SK-N-SH (cell line): ENCODE measurements at regions of chr16 and their contacts with region 1.

Region 1: GRCh38 chr16:361872-362701 is 8.3 kb downstream of the MRPL28 start:
- DNase-seq: peak; percentile 90
- H3K4me3 ChIP-seq: no peak overlapping the region
- H3K27ac ChIP-seq: no peak overlapping the region
- H3K4me1 ChIP-seq: peaks cover 0 to 18% of the 10 kb centered on the region in 2 experiments; a peak in 1 of 4 replicates
- H3K27me3 ChIP-seq: no peaks in the 10 kb centered on the region
- CTCF ChIP-seq: peak; percentile 69
- EP300 ChIP-seq: no peak
- RAD21 ChIP-seq: peak; percentile 93

Region 2: DNA sequence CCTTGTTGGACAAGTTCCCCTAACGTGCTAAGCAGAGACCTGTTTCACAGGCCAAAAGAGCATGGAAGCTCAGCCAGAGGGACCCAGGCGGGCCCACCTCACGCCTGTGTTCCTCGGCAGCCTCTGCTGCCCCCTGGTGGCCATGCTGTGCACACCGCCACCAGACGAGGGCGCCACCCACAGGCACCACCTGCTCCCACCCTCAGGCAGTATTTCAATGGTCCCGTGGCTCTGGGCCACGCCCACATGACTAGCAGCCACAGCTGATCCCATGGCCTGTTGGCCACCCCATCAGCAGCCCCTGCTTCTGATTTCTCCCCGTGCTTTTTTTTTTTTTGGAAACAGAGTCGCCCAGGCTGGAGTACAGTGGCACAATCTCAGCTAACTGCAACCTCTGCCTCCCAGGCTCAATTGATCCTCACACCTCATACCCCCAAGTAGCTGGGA is 265.1 kb before region 1 on chr16:
- CTCF ChIA-PET with region 1: interaction called, 14 read pairs
- POLR2A ChIA-PET with region 1: no interaction called
- DNase-seq: peak; percentile 95
- H3K4me3 ChIP-seq: no peak overlapping the region; a peak in 1 of 4 replicates
- H3K27ac ChIP-seq: no peak overlapping the region
- H3K4me1 ChIP-seq: peaks cover 0 to 8% of the 10 kb centered on the region in 2 experiments; a peak in 1 of 4 replicates
- H3K27me3 ChIP-seq: no peaks in the 10 kb centered on the region
- CTCF ChIP-seq: peak; percentile 99
- EP300 ChIP-seq: no peak
- RAD21 ChIP-seq: peak; percentile 83

Region 3: GRCh38 chr16:106623-107324 is 255.3 kb before region 1 on chr16:
- CTCF ChIA-PET with region 1: interaction called, 74 read pairs
- POLR2A ChIA-PET with region 1: no interaction called
- DNase-seq: peak; percentile 79
- H3K4me3 ChIP-seq: no peak overlapping the region; a peak in 1 of 4 replicates
- H3K27ac ChIP-seq: no peak overlapping the region
- H3K4me1 ChIP-seq: no peaks in the 10 kb centered on the region; a peak in 1 of 4 replicates
- H3K27me3 ChIP-seq: no peaks in the 10 kb centered on the region
- CTCF ChIP-seq: peak; percentile 84
- EP300 ChIP-seq: no peak
- RAD21 ChIP-seq: peak; percentile 83

Region 4: DNA sequence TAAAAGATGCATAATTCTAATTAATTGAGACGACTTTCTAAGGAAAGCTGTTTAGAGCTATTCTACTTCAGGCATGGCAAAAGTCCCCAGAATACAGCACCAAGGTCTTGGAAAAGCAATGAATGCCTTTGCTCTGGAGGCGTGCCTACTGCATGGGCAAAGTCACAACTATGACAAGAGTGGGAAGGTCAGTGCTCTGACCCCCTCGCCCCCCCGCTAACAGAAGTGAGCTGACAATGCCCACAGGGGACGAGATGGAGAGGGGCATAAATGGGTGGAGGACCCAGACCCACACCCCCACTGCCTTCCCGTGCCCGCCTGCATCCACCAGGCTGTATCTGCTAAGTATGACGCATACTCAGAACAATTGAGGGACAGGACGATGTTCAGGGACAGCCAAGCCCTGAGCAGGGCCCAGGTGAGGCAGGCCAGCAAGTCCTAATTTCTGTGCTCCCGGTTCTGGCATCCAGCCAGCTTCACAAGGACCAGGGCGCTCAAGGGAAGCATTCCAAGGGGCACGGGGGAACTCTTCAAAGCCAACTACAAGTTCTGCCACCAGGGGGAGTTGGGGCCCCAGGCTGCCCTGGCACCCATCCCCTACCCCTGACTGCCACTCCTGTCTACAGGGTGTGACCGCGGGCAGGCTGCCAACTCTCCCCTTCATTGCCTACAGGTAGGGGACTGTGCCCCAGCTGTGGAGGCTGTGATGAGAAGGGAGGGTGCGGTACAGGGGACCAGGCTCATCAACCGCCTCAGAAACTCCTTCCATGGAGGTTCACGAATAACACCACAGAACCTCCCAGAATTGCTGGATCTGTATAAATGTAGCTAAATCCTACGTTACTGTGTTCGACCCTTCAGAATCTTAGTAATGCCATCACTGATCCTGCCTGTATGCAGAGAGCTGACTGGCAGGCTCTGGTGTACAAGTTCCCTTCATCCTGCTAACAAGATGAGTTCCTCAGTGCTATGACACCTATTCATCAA is 244.4 kb before region 1 on chr16:
- CTCF ChIA-PET with region 1: interaction called, 33 read pairs
- POLR2A ChIA-PET with region 1: no interaction called
- DNase-seq: peak; percentile 87
- H3K4me3 ChIP-seq: no peak overlapping the region
- H3K27ac ChIP-seq: no peak overlapping the region
- H3K4me1 ChIP-seq: peaks cover 6 to 14% of the 10 kb centered on the region in 2 experiments; a peak in 3 of 4 replicates
- H3K27me3 ChIP-seq: no peaks in the 10 kb centered on the region
- CTCF ChIP-seq: peak; percentile 74
- EP300 ChIP-seq: no peak
- RAD21 ChIP-seq: peak; percentile 62

Region 5: DNA sequence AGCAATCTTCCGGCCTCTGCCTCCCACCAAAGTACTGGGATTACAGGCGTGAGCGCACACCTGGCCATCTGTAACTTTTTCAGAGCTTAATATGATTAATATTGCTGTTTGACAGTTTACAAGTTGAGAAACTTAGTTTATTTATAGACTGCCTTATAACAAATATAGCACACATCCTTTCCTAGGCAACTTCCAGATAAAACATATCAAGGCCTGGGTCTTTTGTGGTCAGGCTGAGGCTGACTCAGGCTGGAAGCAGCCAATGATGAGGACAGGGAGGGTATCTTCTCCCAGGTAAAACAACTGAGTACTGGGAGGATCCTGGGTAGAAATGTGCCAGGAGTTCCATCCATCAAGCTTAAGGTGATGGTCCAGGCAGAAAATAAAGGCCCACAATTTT is 149.1 kb before region 1 on chr16:
- CTCF ChIA-PET with region 1: interaction called, 17 read pairs
- POLR2A ChIA-PET with region 1: no interaction called
- DNase-seq: no peak
- H3K4me3 ChIP-seq: no peak overlapping the region
- H3K27ac ChIP-seq: no peak overlapping the region
- H3K4me1 ChIP-seq: no peaks in the 10 kb centered on the region
- H3K27me3 ChIP-seq: no peaks in the 10 kb centered on the region
- CTCF ChIP-seq: no peak
- EP300 ChIP-seq: no peak
- RAD21 ChIP-seq: no peak

Region 6: DNA sequence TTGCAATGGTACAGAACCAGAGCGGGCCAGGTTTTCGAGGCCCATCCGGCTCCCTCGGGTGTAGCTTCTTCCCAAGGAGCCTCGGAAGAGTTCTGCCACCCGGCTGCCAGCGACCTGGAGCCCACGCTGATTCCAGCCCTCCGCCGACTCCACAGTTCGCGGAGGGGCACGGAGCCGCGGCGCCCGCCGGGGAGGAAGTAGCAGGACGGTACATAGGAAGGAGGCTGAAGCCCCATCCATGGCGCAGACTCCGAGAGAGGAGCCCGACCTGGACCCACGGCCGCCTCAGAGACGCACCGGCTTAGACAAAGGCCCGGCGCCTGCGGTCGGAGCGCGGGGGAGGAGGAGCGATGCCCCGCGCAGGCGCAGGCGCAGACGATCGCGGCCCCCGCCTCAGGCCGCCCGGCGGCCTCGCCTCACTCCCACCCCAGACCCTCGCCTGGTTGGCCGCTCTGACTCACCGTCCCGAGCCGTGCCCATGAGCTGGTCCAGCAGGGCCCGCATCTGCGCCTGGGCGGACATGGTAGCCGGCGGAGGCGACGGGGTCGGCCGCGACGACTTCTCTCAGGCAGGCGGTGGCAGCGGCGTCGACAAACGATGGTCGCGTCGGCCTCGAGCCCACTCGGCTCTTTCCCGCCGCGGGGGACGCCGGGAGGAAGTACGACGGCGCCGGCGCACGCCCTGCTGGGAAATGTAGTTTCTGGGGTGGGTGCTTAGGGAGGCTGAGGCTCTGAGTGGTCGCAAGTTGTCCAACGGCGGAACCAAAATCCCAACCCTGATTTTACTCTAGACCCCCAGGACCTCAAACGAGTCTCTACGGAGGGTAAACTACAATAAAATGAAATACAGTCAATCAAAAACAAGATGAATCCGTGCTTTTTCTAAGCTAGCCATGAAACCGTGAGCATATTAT is 133.0 kb before region 1 on chr16 and contains the start of gene LUC7L:
- CTCF ChIA-PET with region 1: interaction called, 18 read pairs
- POLR2A ChIA-PET with region 1: interaction called, 3 read pairs
- DNase-seq: peak; percentile 98
- H3K4me3 ChIP-seq: peak within 1 kb of the TSS; percentile 78 to 100
- H3K27ac ChIP-seq: peak within 1 kb of the TSS; percentile 94 to 96
- H3K4me1 ChIP-seq: peaks cover 10% of the 10 kb centered on the region in 2 experiments; a peak in 3 of 4 replicates
- H3K27me3 ChIP-seq: no peaks in the 10 kb centered on the region
- CTCF ChIP-seq: no peak
- EP300 ChIP-seq: 0 out of 4 replicates have a peak, but pooled peaks of 1 of the 2 experiments have one; percentile 8
- RAD21 ChIP-seq: no peak
- polyA plus RNA-seq, gene LUC7L: 97.7 and 105 TPM in 2 replicates